ENCODE measurements at regions of chr11 and their contacts with region 1.

Region 1: GRCh38 chr11:57530596-57531507 is at the start of gene TIMM10:
- DNase-seq: peak; percentile 97 to 99
- H3K4me3 ChIP-seq: peak within 1 kb of the TSS; percentile 78
- H3K4me3 Mint-ChIP-seq: peak within 1 kb of the TSS; percentile 92
- H3K27ac Mint-ChIP-seq: peak within 1 kb of the TSS; percentile 89
- H3K4me1 ChIP-seq: peaks cover 14% of the 10 kb centered on the region
- H3K4me1 Mint-ChIP-seq: peaks cover 22% of the 10 kb centered on the region
- H3K27me3 ChIP-seq: no peaks in the 10 kb centered on the region
- H3K27me3 Mint-ChIP-seq: no peaks in the 10 kb centered on the region
- CTCF ChIP-seq: no peak
- total RNA-seq, gene TIMM10: 102 and 103 TPM in 2 replicates

Region 2: GRCh38 chr11:57345555-57346211 is 185.2 kb before region 1 on chr11:
- CTCF ChIA-PET with region 1: interaction called, 28 read pairs
- POLR2A ChIA-PET with region 1: no interaction called
- intact Hi-C with region 1: loop called (anchors 1 kb)
- DNase-seq: peak; percentile 76 to 82
- H3K4me3 ChIP-seq: no peak overlapping the region
- H3K4me3 Mint-ChIP-seq: no peak overlapping the region
- H3K27ac Mint-ChIP-seq: no peak overlapping the region
- H3K4me1 ChIP-seq: peaks cover 6% of the 10 kb centered on the region; the same call in 1 of the 2 replicates
- H3K4me1 Mint-ChIP-seq: peaks cover 7% of the 10 kb centered on the region
- H3K27me3 ChIP-seq: no peaks in the 10 kb centered on the region
- H3K27me3 Mint-ChIP-seq: no peaks in the 10 kb centered on the region
- CTCF ChIP-seq: peak; percentile 78 to 86

Region 3: GRCh38 chr11:57480409-57481137 is 50.3 kb before region 1 on chr11:
- CTCF ChIA-PET with region 1: interaction called, 17 read pairs
- POLR2A ChIA-PET with region 1: interaction called, 4 read pairs
- intact Hi-C with region 1: loop called (anchors 1 kb)
- DNase-seq: peak; percentile 73 to 80
- H3K4me3 ChIP-seq: no peak overlapping the region
- H3K4me3 Mint-ChIP-seq: no peak overlapping the region
- H3K27ac Mint-ChIP-seq: peak overlapping the region; percentile 5
- H3K4me1 ChIP-seq: peaks cover 5% of the 10 kb centered on the region; the same call in 1 of the 2 replicates
- H3K4me1 Mint-ChIP-seq: peaks cover 16% of the 10 kb centered on the region
- H3K27me3 ChIP-seq: no peaks in the 10 kb centered on the region
- H3K27me3 Mint-ChIP-seq: no peaks in the 10 kb centered on the region
- CTCF ChIP-seq: peak; percentile 61 to 74

Region 4: DNA sequence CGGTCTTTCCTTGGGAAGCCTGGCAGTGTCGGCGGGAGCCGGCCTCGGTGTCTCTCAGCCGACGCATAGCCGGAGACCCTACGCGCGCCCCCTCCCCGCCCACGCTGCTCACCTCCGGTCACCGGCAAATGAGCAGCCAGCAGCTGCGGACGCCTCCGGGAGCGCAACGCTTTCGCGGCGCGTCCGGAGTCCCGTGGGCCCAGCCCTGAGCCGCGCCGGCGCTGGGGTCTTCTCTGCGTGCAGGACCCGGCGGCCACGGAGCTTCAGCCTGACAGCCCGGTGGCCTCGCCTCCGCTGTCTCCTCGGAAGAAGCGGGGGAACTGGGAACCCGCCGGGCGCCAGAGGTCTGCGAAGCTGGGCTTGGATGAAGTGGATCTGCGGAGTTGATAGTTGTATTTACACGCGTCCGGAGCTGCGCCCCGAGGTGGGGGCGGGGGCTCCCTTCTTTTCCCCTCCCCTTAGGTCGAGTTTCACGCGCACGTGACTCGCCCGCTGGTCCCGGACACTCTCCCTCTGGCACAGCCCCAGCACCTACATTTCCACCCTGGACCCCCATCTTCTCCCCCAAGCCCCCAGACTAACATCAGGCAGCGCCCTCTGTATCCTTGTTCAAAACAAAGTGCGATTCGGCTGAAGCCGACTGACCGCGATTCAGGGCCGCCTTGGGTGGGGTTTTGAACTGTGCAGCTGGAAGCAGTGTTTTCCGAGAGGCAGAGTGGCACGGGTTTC is 15.4 kb before region 1 on chr11 and contains the start of gene SLC43A1:
- CTCF ChIA-PET with region 1: interaction called, 11 read pairs
- POLR2A ChIA-PET with region 1: interaction called, 3 read pairs
- intact Hi-C with region 1: loop called (anchors 1 kb)
- DNase-seq: peak; percentile 66 to 75
- H3K4me3 ChIP-seq: peak within 1 kb of the TSS; percentile 79
- H3K4me3 Mint-ChIP-seq: peak within 1 kb of the TSS; percentile 91
- H3K27ac Mint-ChIP-seq: peak within 1 kb of the TSS; percentile 82
- H3K4me1 ChIP-seq: peaks cover 8% of the 10 kb centered on the region
- H3K4me1 Mint-ChIP-seq: no peaks in the 10 kb centered on the region
- H3K27me3 ChIP-seq: no peaks in the 10 kb centered on the region
- H3K27me3 Mint-ChIP-seq: no peaks in the 10 kb centered on the region
- CTCF ChIP-seq: no peak
- total RNA-seq, gene SLC43A1: 71.7 and 80.5 TPM in 2 replicates

Region 5: GRCh38 chr11:57562596-57562995 is 31.7 kb after region 1 on chr11:
- CTCF ChIA-PET with region 1: interaction called, 5 read pairs
- POLR2A ChIA-PET with region 1: no interaction called
- intact Hi-C with region 1: loop called (anchors 1 kb)
- DNase-seq: peak in 1 of 2 experiments; percentile 53
- H3K4me3 ChIP-seq: no peak overlapping the region
- H3K4me3 Mint-ChIP-seq: no peak overlapping the region
- H3K27ac Mint-ChIP-seq: peak overlapping the region; percentile 19
- H3K4me1 ChIP-seq: peaks cover 6% of the 10 kb centered on the region; the same call in 1 of the 2 replicates
- H3K4me1 Mint-ChIP-seq: peaks cover 7% of the 10 kb centered on the region
- H3K27me3 ChIP-seq: no peaks in the 10 kb centered on the region
- H3K27me3 Mint-ChIP-seq: no peaks in the 10 kb centered on the region
- CTCF ChIP-seq: peak; percentile 26 to 30

Region 6: GRCh38 chr11:57644748-57645688 is 114.2 kb after region 1 on chr11:
- CTCF ChIA-PET with region 1: interaction called, 6 read pairs
- POLR2A ChIA-PET with region 1: no interaction called
- intact Hi-C with region 1: loop called (anchors 1 kb)
- DNase-seq: peak; percentile 86 to 91
- H3K4me3 ChIP-seq: no peak overlapping the region
- H3K4me3 Mint-ChIP-seq: no peak overlapping the region
- H3K27ac Mint-ChIP-seq: no peak overlapping the region
- H3K4me1 ChIP-seq: peaks cover 17% of the 10 kb centered on the region
- H3K4me1 Mint-ChIP-seq: peaks cover 8% of the 10 kb centered on the region
- H3K27me3 ChIP-seq: peaks cover 2% of the 10 kb centered on the region; the same call in 1 of the 2 replicates
- H3K27me3 Mint-ChIP-seq: peaks cover 9% of the 10 kb centered on the region
- CTCF ChIP-seq: peak; percentile 91 to 96